Esophagus squamous epithelium (tissue), 5 donors: ENCODE measurements at regions of chr20 and their contacts with region 1.

Region 1: GRCh38 chr20:45812157-45813020 is at the start of gene UBE2C:
- DNase-seq: peak; percentile 84
- H3K4me3 ChIP-seq: peak within 1 kb of the TSS; percentile 60 to 79 (median 65)
- H3K27ac ChIP-seq: peak within 1 kb of the TSS; percentile 42 to 76 (median 70)
- H3K4me1 ChIP-seq: peaks cover 8 to 32% (median 12%) of the 10 kb centered on the region in 3 donors
- H3K27me3 ChIP-seq: no peaks in the 10 kb centered on the region
- CTCF ChIP-seq: no peak
- POLR2A ChIP-seq: peak in 1 of 4 donors; percentile 42
- total RNA-seq, gene UBE2C: 17.4 to 54.4 (median 31.2) TPM

Region 2: GRCh38 chr20:45969347-45970242 is 157.2 kb after region 1 on chr20:
- intact Hi-C with region 1: loop called (anchors 10 kb)
- DNase-seq: no peak
- H3K4me3 ChIP-seq: peak overlapping the region in 2 of 4 donors; percentile 77 to 89
- H3K27ac ChIP-seq: peak overlapping the region; percentile 31 to 100 (median 98)
- H3K4me1 ChIP-seq: peaks cover 18 to 47% (median 22%) of the 10 kb centered on the region in 3 donors
- H3K27me3 ChIP-seq: no peaks in the 10 kb centered on the region
- CTCF ChIP-seq: peak; percentile 48 to 63 (median 60)
- POLR2A ChIP-seq: no peak